A549 (cell line): ENCODE measurements at regions of chr2 and their contacts with region 1.

Region 1: DNA sequence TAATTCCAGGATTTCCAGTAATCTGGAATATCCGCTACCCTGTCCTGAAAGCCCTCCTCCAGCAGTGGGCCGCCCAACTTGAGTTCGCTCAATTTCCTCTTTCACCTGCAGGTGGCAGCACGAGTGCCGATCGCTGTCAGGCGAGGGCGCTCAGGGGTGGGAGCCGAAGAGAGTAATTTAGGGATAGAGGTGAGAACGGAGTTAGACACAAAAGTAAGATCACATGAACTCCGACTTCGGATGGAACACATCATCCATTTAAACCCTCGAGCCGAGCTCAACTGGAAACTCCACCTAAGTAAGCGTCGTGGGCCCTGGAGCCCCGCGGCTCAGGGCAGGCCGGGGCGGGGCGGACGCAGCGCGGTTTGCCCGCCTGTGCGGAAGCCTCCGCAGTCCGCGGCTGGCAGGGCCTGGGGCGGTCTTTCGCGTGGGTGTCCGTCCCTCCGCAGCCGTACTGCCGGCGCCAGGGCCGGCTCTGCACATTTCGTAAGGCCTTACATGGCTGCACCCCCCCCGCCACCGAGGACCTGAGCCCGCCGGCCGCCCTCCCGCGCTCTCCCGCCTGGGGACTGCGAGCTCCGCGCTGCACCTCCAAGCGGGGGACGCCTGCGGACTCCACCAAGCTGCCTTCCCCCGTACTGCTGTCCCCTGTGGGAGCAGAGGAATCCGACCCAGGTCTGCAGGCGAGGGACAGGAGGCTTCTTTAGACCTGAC is 61.2 kb downstream of the SEMA4F start:
- DNase-seq: peak; percentile 81 to 82
- ATAC-seq: peak; percentile 90 to 97
- H3K4me3 ChIP-seq: peak overlapping the region; percentile 47
- H3K27ac ChIP-seq: peak overlapping the region; percentile 13 to 83; a peak in 4 of 6 replicates
- H3K4me1 ChIP-seq: no peaks in the 10 kb centered on the region
- CTCF ChIP-seq: peak; percentile 98
- EP300 ChIP-seq: no peak
- POLR2A ChIP-seq: no peak
- RAD21 ChIP-seq: peak; percentile 89 to 90

Region 2: GRCh38 chr2:74690571-74690970 is 24.7 kb before region 1 on chr2:
- CTCF ChIA-PET with region 1: interaction called, 31 read pairs
- POLR2A ChIA-PET with region 1: no interaction called
- DNase-seq: peak; percentile 70 to 73
- ATAC-seq: peak; percentile 85 to 94
- H3K4me3 ChIP-seq: no peak overlapping the region
- H3K27ac ChIP-seq: no peak overlapping the region
- H3K4me1 ChIP-seq: no peaks in the 10 kb centered on the region; the same call in 2 of the 3 replicates
- CTCF ChIP-seq: peak; percentile 97
- EP300 ChIP-seq: no peak
- POLR2A ChIP-seq: no peak
- RAD21 ChIP-seq: peak; percentile 96 to 99

Region 3: GRCh38 chr2:74703373-74703772 is 11.9 kb before region 1 on chr2:
- CTCF ChIA-PET with region 1: interaction called, 43 read pairs
- POLR2A ChIA-PET with region 1: no interaction called
- DNase-seq: no peak
- ATAC-seq: no peak
- H3K4me3 ChIP-seq: no peak overlapping the region
- H3K27ac ChIP-seq: no peak overlapping the region
- H3K4me1 ChIP-seq: no peaks in the 10 kb centered on the region
- CTCF ChIP-seq: no peak
- EP300 ChIP-seq: no peak
- POLR2A ChIP-seq: no peak
- RAD21 ChIP-seq: no peak

Region 4: GRCh38 chr2:74740389-74741075 is 25.3 kb after region 1 on chr2:
- CTCF ChIA-PET with region 1: interaction called, 26 read pairs
- POLR2A ChIA-PET with region 1: no interaction called
- DNase-seq: peak; percentile 88 to 95
- ATAC-seq: peak; percentile 95 to 98
- H3K4me3 ChIP-seq: no peak overlapping the region
- H3K27ac ChIP-seq: peak overlapping the region; percentile 34 to 75
- H3K4me1 ChIP-seq: peaks cover 28% of the 10 kb centered on the region
- CTCF ChIP-seq: no peak
- EP300 ChIP-seq: peak; percentile 5 to 45; a peak in 2 of 5 replicates
- POLR2A ChIP-seq: no peak
- RAD21 ChIP-seq: peak; percentile 22 to 41; a peak in 4 of 5 replicates

Region 5: DNA sequence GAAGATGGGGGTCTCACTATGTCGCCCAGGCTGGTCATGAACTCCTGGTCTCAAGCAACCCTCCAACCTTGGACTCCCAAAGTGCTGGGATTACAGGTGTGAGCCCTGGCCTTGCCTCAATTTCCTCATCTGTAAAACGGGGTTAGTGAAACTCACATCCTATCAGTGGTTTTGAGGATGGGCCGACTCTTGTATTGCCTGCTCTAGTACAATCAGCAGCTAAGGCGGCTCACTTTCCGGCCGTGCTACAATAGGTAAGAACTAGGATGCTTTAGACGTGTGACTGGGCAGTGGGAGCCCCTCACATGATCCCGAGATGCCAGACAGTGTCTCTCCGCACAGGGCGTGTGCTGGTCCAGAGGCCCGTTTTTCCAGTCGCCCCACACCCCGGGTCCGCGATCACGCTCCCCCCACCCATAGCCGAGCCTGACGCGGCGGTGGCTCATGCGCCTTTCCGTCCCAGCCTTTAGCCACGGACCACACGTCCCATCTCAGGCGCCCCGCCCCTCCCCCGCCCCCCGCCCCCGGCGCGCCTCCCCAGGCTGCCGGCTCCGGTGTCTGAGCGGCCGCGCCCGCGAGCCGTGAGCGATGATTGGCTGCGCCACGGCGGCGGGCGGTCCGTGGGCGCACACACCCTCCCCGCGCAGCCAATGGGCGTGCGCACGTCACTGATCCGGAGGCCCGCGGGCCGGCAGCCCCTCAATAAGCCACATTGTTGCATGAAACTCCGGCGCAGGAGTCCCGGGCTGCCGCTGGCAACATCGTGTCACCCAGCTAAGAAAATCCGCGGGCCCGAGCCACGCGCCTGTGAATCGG is 118.4 kb after region 1 on chr2 and contains the start of gene HK2:
- CTCF ChIA-PET with region 1: interaction called, 33 read pairs
- POLR2A ChIA-PET with region 1: interaction called, 4 read pairs
- DNase-seq: peak; percentile 62 to 78
- ATAC-seq: peak; percentile 80 to 88
- H3K4me3 ChIP-seq: peak within 1 kb of the TSS; percentile 47
- H3K27ac ChIP-seq: peak within 1 kb of the TSS; percentile 15 to 79; a peak in 5 of 6 replicates
- H3K4me1 ChIP-seq: peaks cover 7% of the 10 kb centered on the region; the same call in 1 of the 3 replicates
- CTCF ChIP-seq: no peak
- EP300 ChIP-seq: no peak
- POLR2A ChIP-seq: no peak
- RAD21 ChIP-seq: no peak
- polyA plus RNA-seq, gene HK2: 1.1 and 1.2 TPM in 2 replicates

Region 6: DNA sequence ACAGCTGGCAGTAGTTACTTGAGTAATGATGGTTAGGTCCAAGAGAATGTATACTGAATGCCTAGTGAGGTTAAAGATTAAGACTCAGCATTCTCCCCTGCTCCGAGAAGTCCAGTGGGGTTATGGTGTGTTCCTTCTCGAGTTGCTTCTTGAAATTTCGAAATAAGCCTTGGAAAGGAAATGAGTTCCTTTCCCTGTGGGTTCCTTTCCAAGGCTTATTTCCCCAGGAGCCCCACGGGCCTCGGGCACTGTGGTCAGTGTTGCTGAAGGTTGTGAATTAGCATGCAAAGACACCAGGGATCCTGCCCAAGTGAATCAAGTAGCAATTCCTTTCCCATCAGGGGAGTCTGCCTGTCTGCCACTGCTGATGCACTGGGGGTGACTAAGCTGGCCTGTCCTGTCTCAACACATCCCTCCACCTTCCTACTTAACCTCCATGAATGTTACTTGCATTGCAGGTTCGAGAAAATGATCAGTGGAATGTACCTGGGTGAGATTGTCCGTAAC is 172.3 kb after region 1 on chr2:
- CTCF ChIA-PET with region 1: interaction called, 48 read pairs
- POLR2A ChIA-PET with region 1: no interaction called
- DNase-seq: no peak
- ATAC-seq: peak in 1 of 2 experiments; percentile 22; a peak in 2 of 6 replicates
- H3K4me3 ChIP-seq: no peak overlapping the region
- H3K27ac ChIP-seq: no peak overlapping the region
- H3K4me1 ChIP-seq: peaks cover 11% of the 10 kb centered on the region; the same call in 2 of the 3 replicates
- CTCF ChIP-seq: no peak
- EP300 ChIP-seq: no peak
- POLR2A ChIP-seq: no peak
- RAD21 ChIP-seq: no peak